Aorta (tissue), 5 donors: ENCODE measurements at regions of chr4 and their contacts with region 1.

Region 1: GRCh38 chr4:153083447-153083947 is 120.7 kb upstream of the TRIM2 start:
- DNase-seq: no peak
- ATAC-seq: peak; percentile 73
- H3K4me3 ChIP-seq: no peak overlapping the region
- H3K27ac ChIP-seq: no peak overlapping the region
- H3K4me1 ChIP-seq: no peaks in the 10 kb centered on the region
- H3K27me3 ChIP-seq: no peaks in the 10 kb centered on the region

Region 2: DNA sequence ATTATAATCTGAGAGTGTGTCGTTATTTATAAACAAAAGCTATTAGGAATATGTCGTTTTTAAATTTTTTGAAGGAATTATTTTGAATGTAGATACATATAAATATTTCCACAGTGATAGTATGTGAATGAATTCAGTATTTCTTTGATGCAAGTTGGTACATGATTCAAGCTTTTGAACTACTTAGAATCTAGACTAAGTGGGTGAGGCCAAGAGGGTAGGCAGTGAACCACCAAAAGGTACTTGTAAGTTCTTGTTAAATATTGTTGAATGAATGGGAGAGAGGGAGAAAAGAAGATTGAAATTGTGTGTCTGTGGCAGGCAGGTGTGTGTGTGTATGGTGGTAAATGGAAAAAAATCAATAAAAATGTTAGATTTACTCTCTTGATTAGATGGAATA is 234.1 kb before region 1 on chr4:
- intact Hi-C with region 1: loop called (anchors 2 to 5 kb)
- DNase-seq: no peak
- ATAC-seq: no peak
- H3K4me3 ChIP-seq: no peak overlapping the region
- H3K27ac ChIP-seq: no peak overlapping the region
- H3K4me1 ChIP-seq: no peaks in the 10 kb centered on the region
- H3K27me3 ChIP-seq: no peaks in the 10 kb centered on the region

Region 3: DNA sequence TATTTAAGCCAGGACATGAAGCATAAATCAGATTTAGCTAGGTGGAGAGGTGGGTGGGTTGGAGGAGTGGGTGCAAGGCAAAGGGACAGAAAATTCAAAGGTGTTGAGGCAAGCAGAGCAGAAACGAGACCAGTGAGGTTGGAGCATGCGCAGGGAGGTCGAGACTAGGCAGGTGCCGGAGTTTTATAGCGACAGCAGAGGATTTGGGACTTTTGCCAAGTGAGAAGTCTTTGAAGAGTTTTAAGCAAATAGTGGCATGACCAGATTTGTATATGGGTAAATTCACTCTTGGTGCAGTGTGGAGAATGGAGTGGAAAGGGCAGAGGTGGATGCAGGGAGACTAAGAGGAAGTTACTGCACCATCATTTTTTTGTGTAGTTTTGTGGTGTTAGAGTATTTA is 493.6 kb after region 1 on chr4:
- intact Hi-C with region 1: no loop called
- DNase-seq: no peak
- ATAC-seq: no peak
- H3K4me3 ChIP-seq: no peak overlapping the region
- H3K27ac ChIP-seq: no peak overlapping the region
- H3K4me1 ChIP-seq: peaks cover 0 to 3% of the 10 kb centered on the region in 2 donors
- H3K27me3 ChIP-seq: no peaks in the 10 kb centered on the region